PC-3 (cell line): ENCODE measurements at regions of chr7 and their contacts with region 1.

Region 1: GRCh38 chr7:112422842-112423496 is 27.3 kb upstream of the IFRD1 start:
- DNase-seq: peak; percentile 98
- ATAC-seq: peak; percentile 95
- H3K4me3 ChIP-seq: peak overlapping the region; percentile 30; the same call in 1 of the 2 replicates
- H3K27ac ChIP-seq: peak overlapping the region; percentile 70
- H3K4me1 ChIP-seq: peaks cover 37% of the 10 kb centered on the region
- H3K27me3 ChIP-seq: no peaks in the 10 kb centered on the region
- CTCF ChIP-seq: no peak

Region 2: GRCh38 chr7:112302566-112302965 is 120.4 kb before region 1 on chr7:
- CTCF ChIA-PET with region 1: no interaction called
- POLR2A ChIA-PET with region 1: no interaction called
- intact Hi-C with region 1: no loop called
- DNase-seq: no peak
- ATAC-seq: no peak
- H3K4me3 ChIP-seq: no peak overlapping the region
- H3K27ac ChIP-seq: no peak overlapping the region
- H3K4me1 ChIP-seq: no peaks in the 10 kb centered on the region
- H3K27me3 ChIP-seq: no peaks in the 10 kb centered on the region
- CTCF ChIP-seq: no peak

Region 3: GRCh38 chr7:112449902-112450806 is 27.2 kb after region 1 on chr7 and contains the start of gene IFRD1:
- CTCF ChIA-PET with region 1: no interaction called
- POLR2A ChIA-PET with region 1: interaction called, 14 read pairs
- intact Hi-C with region 1: loop called (anchors 1 kb)
- DNase-seq: peak; percentile 97
- ATAC-seq: peak; percentile 85
- H3K4me3 ChIP-seq: peak within 1 kb of the TSS; percentile 96
- H3K27ac ChIP-seq: peak within 1 kb of the TSS; percentile 80
- H3K4me1 ChIP-seq: peaks cover 29% of the 10 kb centered on the region
- H3K27me3 ChIP-seq: no peaks in the 10 kb centered on the region
- CTCF ChIP-seq: no peak
- total RNA-seq, gene IFRD1: 72.6 and 73.4 TPM in 2 replicates

Region 4: GRCh38 chr7:112501801-112502503 is 79.0 kb after region 1 on chr7:
- CTCF ChIA-PET with region 1: no interaction called
- POLR2A ChIA-PET with region 1: no interaction called
- intact Hi-C with region 1: no loop called
- DNase-seq: no peak
- ATAC-seq: no peak
- H3K4me3 ChIP-seq: no peak overlapping the region
- H3K27ac ChIP-seq: no peak overlapping the region
- H3K4me1 ChIP-seq: no peaks in the 10 kb centered on the region
- H3K27me3 ChIP-seq: no peaks in the 10 kb centered on the region
- CTCF ChIP-seq: no peak